Activated CD4-positive, alpha-beta memory T cell treated with anti-CD3 and anti-CD28 coated beads, Interleukin-2, amount 10 ng/mL, durations not matched to agents 7 days and 5 days (primary cell): ENCODE measurements at regions of chr2 and their contacts with region 1.

Region 1: DNA sequence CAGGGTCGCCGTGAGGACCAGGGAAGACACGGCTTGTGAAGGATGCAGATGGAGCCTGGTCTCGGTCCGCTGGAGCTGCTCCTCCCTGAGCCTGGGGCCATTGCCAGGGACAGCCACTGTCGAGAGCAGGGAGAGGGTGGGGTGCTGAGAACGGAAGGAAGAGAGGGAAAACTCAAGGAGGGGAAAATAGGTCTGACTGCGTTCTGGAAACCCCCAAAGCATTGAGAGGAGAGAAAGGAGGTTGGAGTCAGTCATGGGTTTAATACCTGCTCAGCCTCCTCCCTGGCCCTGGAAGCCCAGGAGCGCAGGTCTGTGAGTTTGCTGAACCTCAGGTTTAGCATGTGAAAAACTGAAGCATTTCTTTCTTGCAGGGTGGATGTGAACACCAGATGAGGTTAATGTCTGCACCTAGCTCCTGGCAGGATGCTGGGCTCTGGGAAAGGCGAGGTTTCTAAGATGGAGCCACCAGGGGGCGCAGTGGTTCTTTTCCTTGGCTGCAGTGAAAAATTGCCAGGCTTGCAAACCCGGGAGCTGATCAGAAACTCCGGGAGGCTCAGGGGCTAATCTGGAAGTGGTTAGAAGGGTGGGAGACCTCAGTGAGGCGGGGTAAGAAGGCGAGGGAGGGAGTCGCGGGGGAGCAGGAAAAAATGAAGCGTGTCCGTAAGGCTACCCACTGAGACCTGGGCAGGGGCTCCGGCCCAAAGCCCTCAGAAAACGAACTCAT is 33.6 kb upstream of the RNF149 start:
- DNase-seq: peak; percentile 80
- H3K4me3 Mint-ChIP-seq: no peak overlapping the region
- H3K27ac Mint-ChIP-seq: peak overlapping the region; percentile 32
- H3K4me1 Mint-ChIP-seq: peaks cover 42% of the 10 kb centered on the region
- H3K27me3 Mint-ChIP-seq: peaks cover 7% of the 10 kb centered on the region

Region 2: DNA sequence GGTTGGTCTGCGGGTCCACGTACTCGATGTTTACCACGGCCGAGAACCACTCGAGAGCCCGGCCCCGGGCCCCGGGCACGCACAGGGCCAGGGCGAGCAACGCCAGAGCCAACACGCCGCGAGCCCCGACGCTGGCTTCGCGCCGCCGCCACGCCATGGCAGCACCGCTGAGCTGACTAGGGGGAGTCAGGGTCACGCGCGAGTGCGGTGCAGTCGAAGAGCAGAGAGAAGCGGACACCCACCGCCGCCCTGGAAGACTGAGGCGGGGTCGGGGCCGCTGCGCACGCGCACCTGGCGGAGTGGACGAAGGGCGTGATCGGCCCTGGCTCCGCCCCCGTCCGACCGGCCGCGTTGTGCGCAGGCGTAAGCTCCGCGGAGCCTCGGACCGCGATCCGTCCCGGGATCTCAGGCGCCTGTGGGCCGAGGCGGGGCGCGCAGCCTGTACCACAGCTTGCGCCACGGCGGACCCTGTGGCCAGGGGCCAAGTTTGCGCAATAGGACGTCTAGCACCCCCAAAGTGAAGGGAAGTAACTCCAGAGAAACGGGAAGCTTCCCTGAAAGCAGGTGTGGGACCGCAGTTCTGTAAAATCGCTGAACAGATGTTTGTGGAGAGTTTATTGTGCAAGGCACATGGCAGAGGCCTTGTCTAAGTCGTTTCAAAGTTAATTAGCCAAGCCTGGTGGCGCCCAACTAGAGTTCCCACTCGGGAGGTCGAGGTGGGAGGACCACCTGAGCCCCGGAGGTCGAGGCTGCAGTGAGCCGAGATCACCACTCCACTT is 33.4 kb before region 1 on chr2 and contains the start of gene RNF149:
- CTCF ChIA-PET with region 1: interaction called, 30 read pairs
- POLR2A ChIA-PET with region 1: interaction called, 19 read pairs
- DNase-seq: peak; percentile 93
- H3K4me3 Mint-ChIP-seq: peak within 1 kb of the TSS; percentile 100
- H3K27ac Mint-ChIP-seq: peak within 1 kb of the TSS; percentile 97
- H3K4me1 Mint-ChIP-seq: peaks cover 69% of the 10 kb centered on the region
- H3K27me3 Mint-ChIP-seq: no peaks in the 10 kb centered on the region
- total RNA-seq, gene RNF149: 115 to 116 TPM

Region 3: DNA sequence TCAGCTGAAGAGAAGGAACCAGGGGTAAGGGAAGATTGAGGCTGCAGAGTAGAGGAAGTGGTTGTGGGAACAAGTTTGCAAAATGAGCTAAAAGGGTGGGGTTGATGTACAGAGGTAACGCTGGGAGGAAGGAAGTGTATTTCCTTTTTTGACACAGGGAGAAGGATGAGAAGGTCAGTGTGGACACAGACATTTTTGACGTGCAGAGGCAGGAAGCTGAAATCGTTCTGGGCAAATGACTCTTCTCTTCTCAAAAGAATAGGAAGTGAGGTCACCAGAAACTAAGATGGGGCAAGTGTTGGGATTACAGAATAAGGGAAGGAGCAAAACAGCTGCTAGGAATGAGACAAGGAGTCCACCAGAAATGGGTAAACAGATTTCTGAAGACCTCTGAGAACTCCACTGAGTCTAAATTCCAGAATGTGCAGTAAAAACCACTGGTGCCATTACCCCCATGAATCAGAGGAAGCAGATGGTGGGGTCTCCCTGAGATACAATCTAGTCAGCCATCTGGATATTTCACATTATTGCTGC is 13.5 kb before region 1 on chr2:
- CTCF ChIA-PET with region 1: interaction called, 105 read pairs
- POLR2A ChIA-PET with region 1: interaction called, 27 read pairs
- DNase-seq: peak; percentile 69
- H3K4me3 Mint-ChIP-seq: no peak overlapping the region
- H3K27ac Mint-ChIP-seq: no peak overlapping the region
- H3K4me1 Mint-ChIP-seq: peaks cover 10% of the 10 kb centered on the region
- H3K27me3 Mint-ChIP-seq: no peaks in the 10 kb centered on the region

Region 4: DNA sequence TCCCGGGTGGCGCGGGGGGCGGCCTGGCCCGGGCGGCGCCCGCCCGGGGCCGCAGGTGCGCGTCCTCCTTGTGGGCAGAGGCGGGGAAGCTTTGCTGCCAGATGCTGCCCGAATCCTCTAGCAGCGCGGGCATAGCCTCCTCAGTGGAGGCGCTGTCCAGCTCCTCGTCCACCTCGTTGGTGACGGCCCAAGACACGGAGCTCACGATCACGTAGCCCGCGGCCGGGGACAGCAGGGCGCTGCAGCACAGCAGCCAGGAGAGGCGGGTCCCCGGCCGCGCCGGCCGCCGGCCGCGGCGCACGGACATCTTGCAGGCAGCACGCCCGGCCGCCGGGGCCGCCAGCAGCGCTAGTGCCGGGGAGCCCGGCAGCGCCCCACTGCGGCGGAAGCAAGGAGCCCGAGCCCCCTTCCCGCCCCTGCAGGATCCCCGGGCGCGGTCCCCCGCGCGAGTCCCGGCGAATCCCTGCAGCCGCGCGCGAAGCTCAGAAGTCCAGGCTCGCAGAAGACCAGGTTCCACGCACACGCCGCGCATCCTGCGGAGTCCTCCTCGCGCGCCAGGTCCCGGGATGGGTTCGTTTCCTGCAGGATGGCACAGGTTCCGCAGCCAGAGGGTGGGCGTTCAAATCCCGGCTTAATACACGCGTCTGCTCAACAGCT is 45.2 kb after region 1 on chr2 and contains the start of gene CREG2:
- CTCF ChIA-PET with region 1: interaction called, 70 read pairs
- POLR2A ChIA-PET with region 1: interaction called, 5 read pairs
- DNase-seq: peak; percentile 69
- H3K4me3 Mint-ChIP-seq: peak within 1 kb of the TSS; percentile 60
- H3K27ac Mint-ChIP-seq: no peak within 1 kb of the TSS
- H3K4me1 Mint-ChIP-seq: peaks cover 11% of the 10 kb centered on the region
- H3K27me3 Mint-ChIP-seq: peaks cover 58% of the 10 kb centered on the region
- total RNA-seq, gene CREG2: 0.65 to 0.98 TPM

Region 5: DNA sequence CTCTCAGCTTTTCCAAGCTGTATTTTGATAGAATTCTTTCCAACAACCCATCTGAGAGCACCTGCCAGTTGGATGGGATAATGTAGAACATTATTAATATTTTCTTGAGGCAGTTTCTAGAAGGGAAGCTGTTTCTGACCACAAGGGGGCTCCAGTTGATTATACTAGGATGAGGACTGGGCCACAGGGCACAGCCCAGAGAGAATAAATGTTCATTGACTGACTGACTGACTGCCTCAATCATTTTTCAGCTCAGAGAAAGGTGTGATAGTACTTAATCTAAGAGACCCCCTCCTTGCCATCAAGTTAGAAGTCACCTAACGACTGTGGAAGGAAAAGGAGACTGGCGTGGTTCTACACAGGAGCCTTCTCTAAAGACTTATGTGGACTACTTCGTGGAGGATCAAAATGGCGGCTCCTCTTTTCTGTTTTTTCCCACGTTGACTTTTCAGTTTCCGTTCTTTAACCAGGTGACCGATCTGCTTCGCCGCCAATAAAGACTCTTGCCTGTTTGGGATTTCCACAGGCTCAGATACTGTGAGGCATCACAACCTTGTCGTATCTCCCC is 77.1 kb after region 1 on chr2:
- CTCF ChIA-PET with region 1: interaction called, 41 read pairs
- POLR2A ChIA-PET with region 1: no interaction called
- DNase-seq: peak; percentile 64
- H3K4me3 Mint-ChIP-seq: no peak overlapping the region
- H3K27ac Mint-ChIP-seq: no peak overlapping the region
- H3K4me1 Mint-ChIP-seq: no peaks in the 10 kb centered on the region
- H3K27me3 Mint-ChIP-seq: no peaks in the 10 kb centered on the region

Region 6: DNA sequence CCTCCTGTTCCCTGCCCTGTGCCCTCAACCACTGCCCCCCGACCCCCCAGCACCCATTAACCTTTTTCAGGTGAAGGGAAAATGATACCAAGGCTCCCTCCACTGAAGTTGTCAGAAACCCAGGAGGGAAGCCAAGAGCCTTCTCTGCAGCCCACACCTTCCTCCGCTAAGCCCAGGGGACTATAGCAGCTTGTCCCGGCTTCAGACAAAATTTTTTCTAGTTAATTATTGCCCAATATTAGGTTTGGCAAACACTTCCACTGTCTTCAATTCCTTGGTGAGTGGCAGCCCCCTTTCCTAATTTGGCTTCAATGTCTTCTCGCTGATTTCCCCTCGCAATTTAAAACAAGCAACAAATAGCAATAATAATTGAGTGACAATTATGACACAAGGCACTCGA is 108.9 kb after region 1 on chr2:
- CTCF ChIA-PET with region 1: no interaction called
- POLR2A ChIA-PET with region 1: no interaction called
- DNase-seq: no peak
- H3K4me3 Mint-ChIP-seq: no peak overlapping the region
- H3K27ac Mint-ChIP-seq: no peak overlapping the region
- H3K4me1 Mint-ChIP-seq: peaks cover 9% of the 10 kb centered on the region
- H3K27me3 Mint-ChIP-seq: peaks cover 3% of the 10 kb centered on the region

Region 7: DNA sequence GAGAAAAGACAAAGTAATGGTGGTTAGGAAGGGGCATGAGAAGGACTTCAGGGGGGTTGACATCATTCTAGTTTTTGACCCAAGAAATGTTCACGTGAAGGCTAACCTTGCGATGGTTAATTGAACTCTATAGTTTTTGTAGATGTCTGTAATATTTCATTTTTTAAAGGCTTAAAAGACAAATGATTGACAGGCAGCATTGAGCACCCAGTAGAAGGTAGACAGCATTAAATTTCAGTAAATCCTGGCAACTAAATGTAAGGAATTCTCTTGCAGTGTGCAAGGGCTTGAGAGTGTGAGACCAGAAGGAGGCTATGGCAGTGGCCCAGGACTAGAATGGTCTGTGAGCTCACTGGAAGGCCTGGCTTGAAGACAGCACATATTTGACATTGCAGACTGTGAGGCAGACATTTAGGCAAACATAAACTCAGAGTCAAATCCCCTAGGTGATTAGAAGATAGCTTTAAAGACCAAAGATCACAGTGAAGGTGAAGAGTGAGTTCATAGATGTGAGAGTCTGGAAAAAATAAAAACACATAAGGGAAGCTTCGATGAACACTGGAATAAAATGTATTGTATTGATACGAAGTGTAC is 255.4 kb after region 1 on chr2:
- CTCF ChIA-PET with region 1: no interaction called
- POLR2A ChIA-PET with region 1: no interaction called
- DNase-seq: no peak
- H3K4me3 Mint-ChIP-seq: no peak overlapping the region
- H3K27ac Mint-ChIP-seq: no peak overlapping the region
- H3K4me1 Mint-ChIP-seq: peaks cover 4% of the 10 kb centered on the region
- H3K27me3 Mint-ChIP-seq: no peaks in the 10 kb centered on the region